ENCODE measurements at regions of chr5 and their contacts with region 1.

Region 1: DNA sequence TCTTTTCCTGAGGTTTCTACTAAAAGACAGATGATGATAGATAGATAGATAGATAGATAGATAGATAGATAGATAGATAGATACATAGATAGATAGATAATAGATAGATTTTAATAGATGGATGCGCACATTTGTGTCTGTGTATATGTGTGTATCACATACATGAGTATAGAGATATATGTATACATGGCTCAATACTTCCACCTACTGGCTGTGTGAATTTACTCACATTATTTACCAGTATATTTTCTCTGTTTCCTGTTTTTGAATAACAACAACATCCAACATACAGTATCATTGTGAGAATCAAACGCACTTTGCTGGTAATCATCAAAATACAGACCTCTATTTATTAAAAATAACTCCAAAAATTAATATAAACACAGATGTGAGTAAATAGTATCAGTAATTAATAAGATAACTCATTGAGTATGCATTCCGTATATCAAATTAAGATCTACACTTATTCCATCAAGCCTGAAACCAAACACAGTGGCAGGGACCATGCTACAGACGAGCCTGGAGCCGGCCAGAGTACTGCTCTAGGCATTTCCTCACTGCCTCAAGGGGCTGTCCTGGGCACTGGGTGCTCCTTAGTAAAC is 338.0 kb downstream of the SEMA5A start:
- DNase-seq: no peak
- ATAC-seq: peak; percentile 90
- H3K4me3 ChIP-seq: no peak overlapping the region
- H3K27ac ChIP-seq: no peak overlapping the region
- H3K4me1 ChIP-seq: no peaks in the 10 kb centered on the region
- H3K27me3 ChIP-seq: no peaks in the 10 kb centered on the region; a peak in 1 of 4 replicates
- CTCF ChIP-seq: peak; percentile 8 to 67 (median 28); a peak in 4 of 6 replicates
- EP300 ChIP-seq: no peak
- POLR2A ChIP-seq: no peak
- RAD21 ChIP-seq: peak; percentile 71

Region 2: DNA sequence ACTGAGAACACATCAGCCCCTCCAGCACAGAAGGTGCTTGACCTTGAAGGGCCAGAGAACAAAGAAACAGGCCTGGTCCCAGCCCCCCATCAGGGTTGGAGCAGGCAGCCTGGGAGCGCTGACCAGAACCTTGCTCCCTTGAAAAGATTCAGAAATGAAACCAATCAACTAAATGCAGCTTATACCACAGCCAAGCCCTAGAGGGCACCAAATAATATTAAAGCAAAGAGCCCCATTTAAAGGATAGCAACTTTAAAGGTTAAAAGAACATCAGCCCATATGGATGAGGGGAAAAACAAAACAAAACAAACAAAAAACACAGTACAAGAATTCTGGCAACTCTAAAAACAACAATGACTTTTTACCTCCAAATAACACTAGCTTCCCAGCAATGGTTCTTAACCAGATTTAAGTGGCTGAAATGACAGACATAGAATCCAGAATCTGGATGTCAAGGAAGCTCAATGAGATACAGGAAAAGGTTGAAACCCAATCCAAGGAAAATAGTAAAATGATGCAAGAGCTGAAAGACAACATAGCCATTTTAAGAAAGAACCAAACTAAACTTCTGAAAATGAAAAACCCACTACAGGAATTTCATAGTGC is 867.1 kb before region 1 on chr5:
- CTCF ChIA-PET with region 1: interaction called, 3 read pairs
- POLR2A ChIA-PET with region 1: no interaction called
- RAD21 ChIA-PET with region 1: no interaction called
- SMC1A ChIA-PET with region 1: no interaction called
- in situ Hi-C with region 1: no loop called
- intact Hi-C with region 1: loop called (anchors 5 kb)
- DNase-seq: no peak
- ATAC-seq: peak; percentile 54; the same call in 2 of the 3 replicates
- H3K4me3 ChIP-seq: no peak overlapping the region
- H3K27ac ChIP-seq: no peak overlapping the region
- H3K4me1 ChIP-seq: no peaks in the 10 kb centered on the region
- H3K27me3 ChIP-seq: no peaks in the 10 kb centered on the region; a peak in 1 of 4 replicates
- CTCF ChIP-seq: peak; percentile 27 to 46 (median 46); a peak in 5 of 6 replicates
- EP300 ChIP-seq: no peak
- POLR2A ChIP-seq: no peak
- RAD21 ChIP-seq: peak; percentile 67

Region 3: GRCh38 chr5:8864053-8864452 is 343.9 kb before region 1 on chr5:
- CTCF ChIA-PET with region 1: interaction called, 8 read pairs
- POLR2A ChIA-PET with region 1: no interaction called
- RAD21 ChIA-PET with region 1: interaction called, 4 read pairs
- SMC1A ChIA-PET with region 1: interaction called, 3 read pairs
- in situ Hi-C with region 1: loop called (anchors 10 kb)
- intact Hi-C with region 1: loop called (anchors 1 kb)
- DNase-seq: no peak
- ATAC-seq: peak; percentile 80
- H3K4me3 ChIP-seq: no peak overlapping the region
- H3K27ac ChIP-seq: no peak overlapping the region
- H3K4me1 ChIP-seq: no peaks in the 10 kb centered on the region
- H3K27me3 ChIP-seq: no peaks in the 10 kb centered on the region
- CTCF ChIP-seq: peak; percentile 33 to 53 (median 51); a peak in 3 of 6 replicates
- EP300 ChIP-seq: no peak
- POLR2A ChIP-seq: no peak
- RAD21 ChIP-seq: peak; percentile 47

Region 4: DNA sequence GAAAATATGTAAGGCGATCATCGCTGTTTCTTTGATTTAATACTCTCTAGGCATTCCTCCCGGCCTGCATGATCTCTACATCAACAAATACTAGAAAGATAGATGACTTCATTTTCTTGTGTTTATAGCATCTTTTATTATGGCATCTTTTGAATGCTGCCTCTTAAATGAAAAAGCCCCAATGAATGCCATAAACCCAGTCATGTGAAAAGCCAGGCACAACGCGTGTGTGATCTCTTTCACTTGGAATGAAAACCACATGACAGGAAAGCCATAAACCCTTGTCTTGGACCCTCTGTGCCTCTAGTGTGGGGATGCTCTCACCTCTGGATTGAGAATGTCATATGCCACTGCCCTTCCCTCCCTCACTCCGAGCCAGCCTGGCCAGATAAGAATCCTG is 138.3 kb before region 1 on chr5:
- CTCF ChIA-PET with region 1: no interaction called
- POLR2A ChIA-PET with region 1: no interaction called
- RAD21 ChIA-PET with region 1: no interaction called
- SMC1A ChIA-PET with region 1: no interaction called
- in situ Hi-C with region 1: no loop called
- intact Hi-C with region 1: loop called (anchors 5 kb)
- DNase-seq: no peak
- ATAC-seq: no peak
- H3K4me3 ChIP-seq: no peak overlapping the region
- H3K27ac ChIP-seq: no peak overlapping the region
- H3K4me1 ChIP-seq: no peaks in the 10 kb centered on the region
- H3K27me3 ChIP-seq: no peaks in the 10 kb centered on the region
- CTCF ChIP-seq: no peak
- EP300 ChIP-seq: no peak
- POLR2A ChIP-seq: no peak
- RAD21 ChIP-seq: no peak

Region 5: DNA sequence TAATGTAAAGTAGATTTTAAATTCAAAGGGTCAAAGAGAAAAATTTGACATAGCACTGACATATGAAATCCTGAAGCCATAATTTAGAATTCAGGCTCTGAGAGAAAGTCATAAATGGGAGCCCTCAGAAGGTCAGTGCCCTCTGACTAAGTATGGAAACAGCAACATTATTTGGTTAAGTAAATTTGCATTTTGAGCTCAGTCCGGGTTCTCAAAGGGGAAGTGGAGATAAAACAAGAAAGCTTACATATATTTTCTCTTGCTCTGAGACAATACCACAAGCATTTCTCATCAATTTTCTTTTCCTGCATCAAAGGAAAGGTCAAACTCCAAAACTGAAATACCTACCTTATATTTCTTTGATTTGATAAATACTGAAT is 10.0 kb before region 1 on chr5:
- CTCF ChIA-PET with region 1: interaction called, 14 read pairs
- POLR2A ChIA-PET with region 1: no interaction called
- RAD21 ChIA-PET with region 1: no interaction called
- SMC1A ChIA-PET with region 1: interaction called, 3 read pairs
- in situ Hi-C with region 1: no loop called
- intact Hi-C with region 1: no loop called
- DNase-seq: peak; percentile 34
- ATAC-seq: peak; percentile 94
- H3K4me3 ChIP-seq: no peak overlapping the region
- H3K27ac ChIP-seq: no peak overlapping the region
- H3K4me1 ChIP-seq: peaks cover 9% of the 10 kb centered on the region
- H3K27me3 ChIP-seq: no peaks in the 10 kb centered on the region
- CTCF ChIP-seq: no peak
- EP300 ChIP-seq: no peak
- POLR2A ChIP-seq: no peak
- RAD21 ChIP-seq: no peak

Measured in GM12878 (cell line).